Activated CD8-positive, alpha-beta memory T cell treated with anti-CD3 and anti-CD28 coated beads, Interleukin-2, amount 10 ng/mL, durations not matched to agents 7 days and 5 days (primary cell): ENCODE measurements at regions of chr16 and their contacts with region 1.

Region 1: GRCh38 chr16:11715246-11715947 is 27.3 kb downstream of the TXNDC11 start:
- DNase-seq: no peak
- ATAC-seq: no peak
- H3K4me3 Mint-ChIP-seq: no peak overlapping the region
- H3K27ac Mint-ChIP-seq: no peak overlapping the region
- H3K4me1 Mint-ChIP-seq: peaks cover 16% of the 10 kb centered on the region
- H3K27me3 Mint-ChIP-seq: no peaks in the 10 kb centered on the region

Region 2: GRCh38 chr16:11698271-11698689 is 17.1 kb before region 1 on chr16:
- CTCF ChIA-PET with region 1: interaction called, 14 read pairs
- DNase-seq: peak; percentile 54
- ATAC-seq: peak; percentile 57
- H3K4me3 Mint-ChIP-seq: no peak overlapping the region
- H3K27ac Mint-ChIP-seq: peak overlapping the region; percentile 39
- H3K4me1 Mint-ChIP-seq: peaks cover 50% of the 10 kb centered on the region
- H3K27me3 Mint-ChIP-seq: no peaks in the 10 kb centered on the region